Tibial artery (tissue), 4 donors: ENCODE measurements at regions of chr5 and their contacts with region 1.

Region 1: GRCh38 chr5:67209142-67209771 is 12.7 kb upstream of the CD180 start:
- DNase-seq: peak in 1 of 2 donors; percentile 54
- H3K4me3 ChIP-seq: no peak overlapping the region
- H3K27ac ChIP-seq: no peak overlapping the region
- H3K4me1 ChIP-seq: peaks cover 0 to 5% (median 0%) of the 10 kb centered on the region in 4 donors
- H3K27me3 ChIP-seq: no peaks in the 10 kb centered on the region
- CTCF ChIP-seq: peak; percentile 77 to 92

Region 2: DNA sequence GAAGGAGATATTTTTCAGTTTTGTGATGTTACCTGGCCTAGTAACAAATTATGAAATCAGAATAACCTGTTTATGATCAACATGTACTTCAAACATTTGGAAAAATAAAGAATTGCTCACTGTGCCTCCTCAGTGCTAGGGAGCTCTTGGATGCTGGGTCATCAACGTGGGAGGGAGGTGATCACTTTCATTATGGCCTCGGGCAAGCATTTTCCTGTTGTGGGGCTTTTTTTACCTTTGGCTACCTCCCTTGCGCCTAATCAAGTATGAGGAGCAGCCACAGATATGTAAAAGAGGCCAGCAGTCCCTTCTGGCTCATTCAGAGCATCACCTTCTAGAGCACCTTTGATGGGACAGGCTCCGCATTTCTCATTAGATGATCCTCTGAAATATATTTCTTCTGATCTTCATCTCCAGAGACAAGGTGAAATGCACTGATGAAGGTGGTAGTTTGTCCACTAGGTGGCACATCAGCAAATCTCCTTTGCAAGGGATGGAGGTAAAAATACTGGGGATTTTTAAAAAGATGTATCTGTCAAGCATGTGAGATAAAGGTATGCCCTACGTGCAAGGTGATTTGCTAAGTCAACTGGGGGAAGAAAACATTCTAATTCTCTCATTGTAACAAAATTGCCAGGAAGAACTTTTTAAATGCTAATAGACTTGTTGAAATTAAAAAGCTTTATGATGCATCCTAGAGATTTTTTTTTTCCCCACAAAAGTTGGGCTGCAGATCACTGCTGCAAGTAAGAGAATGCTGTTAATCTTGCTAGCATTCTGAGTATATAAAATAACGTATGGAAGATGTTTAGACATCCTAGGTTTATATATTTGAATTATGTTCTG is 394.9 kb before region 1 on chr5:
- intact Hi-C with region 1: loop called (anchors 5 kb)
- DNase-seq: no peak
- H3K4me3 ChIP-seq: no peak overlapping the region
- H3K27ac ChIP-seq: no peak overlapping the region
- H3K4me1 ChIP-seq: no peaks in the 10 kb centered on the region
- H3K27me3 ChIP-seq: peaks cover 0 to 6% of the 10 kb centered on the region in 2 donors
- CTCF ChIP-seq: peak; percentile 62 to 68

Region 3: GRCh38 chr5:66987949-66988838 is 221.1 kb before region 1 on chr5:
- intact Hi-C with region 1: loop called (anchors 10 kb)
- DNase-seq: no peak
- H3K4me3 ChIP-seq: no peak overlapping the region
- H3K27ac ChIP-seq: no peak overlapping the region
- H3K4me1 ChIP-seq: peaks cover 0 to 33% (median 3%) of the 10 kb centered on the region in 4 donors
- H3K27me3 ChIP-seq: no peaks in the 10 kb centered on the region
- CTCF ChIP-seq: peak; percentile 84 to 86

Region 4: GRCh38 chr5:67156976-67157583 is 52.2 kb before region 1 on chr5:
- intact Hi-C with region 1: loop called (anchors 2 kb)
- DNase-seq: no peak
- H3K4me3 ChIP-seq: no peak overlapping the region
- H3K27ac ChIP-seq: no peak overlapping the region
- H3K4me1 ChIP-seq: peaks cover 0 to 18% (median 5%) of the 10 kb centered on the region in 4 donors
- H3K27me3 ChIP-seq: no peaks in the 10 kb centered on the region
- CTCF ChIP-seq: peak; percentile 73 to 75

Region 5: DNA sequence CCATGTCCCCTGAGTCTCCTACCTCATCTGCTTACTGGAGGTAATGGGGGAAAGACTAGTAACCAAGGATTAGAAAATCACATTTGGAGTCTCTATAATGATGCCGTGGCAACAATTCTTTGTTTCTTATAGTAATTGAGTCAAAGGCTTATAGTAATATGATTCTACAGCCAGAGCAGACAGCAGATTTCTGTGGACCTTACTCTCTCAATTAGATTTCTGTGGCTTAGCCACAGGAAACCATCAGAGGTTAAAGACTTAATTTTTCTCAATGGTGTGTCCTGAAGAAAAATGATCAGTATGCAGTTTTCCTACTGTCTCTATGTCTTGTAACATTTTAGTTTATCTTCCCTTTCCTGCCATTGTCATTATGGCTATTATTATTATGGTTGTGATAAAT is 46.6 kb after region 1 on chr5:
- intact Hi-C with region 1: no loop called
- DNase-seq: no peak
- H3K4me3 ChIP-seq: no peak overlapping the region
- H3K27ac ChIP-seq: no peak overlapping the region
- H3K4me1 ChIP-seq: peaks cover 0 to 21% (median 0%) of the 10 kb centered on the region in 4 donors
- H3K27me3 ChIP-seq: no peaks in the 10 kb centered on the region
- CTCF ChIP-seq: no peak